MCF 10A (cell line): ENCODE measurements at regions of chr2 and their contacts with region 1.

Region 1: GRCh38 chr2:127701193-127701650 is at the start of gene SFT2D3:
- DNase-seq: peak; percentile 86
- H3K4me3 Mint-ChIP-seq: peak within 1 kb of the TSS; percentile 84
- H3K27ac Mint-ChIP-seq: peak within 1 kb of the TSS; percentile 94
- H3K4me1 Mint-ChIP-seq: peaks cover 19% of the 10 kb centered on the region
- H3K27me3 Mint-ChIP-seq: no peaks in the 10 kb centered on the region
- CTCF ChIP-seq: no peak
- total RNA-seq, gene SFT2D3: 3.6 and 4.1 TPM in 2 replicates

Region 2: GRCh38 chr2:127770973-127771735 is 69.9 kb after region 1 on chr2:
- CTCF ChIA-PET with region 1: no interaction called
- POLR2A ChIA-PET with region 1: interaction called, 3 read pairs
- intact Hi-C with region 1: loop called (anchors 1 kb)
- DNase-seq: peak; percentile 88
- H3K4me3 Mint-ChIP-seq: no peak overlapping the region
- H3K27ac Mint-ChIP-seq: peak overlapping the region; percentile 89
- H3K4me1 Mint-ChIP-seq: peaks cover 18% of the 10 kb centered on the region
- H3K27me3 Mint-ChIP-seq: no peaks in the 10 kb centered on the region
- CTCF ChIP-seq: no peak